Transverse colon (tissue), 4 donors: ENCODE measurements at regions of chr5 and their contacts with region 1.

Region 1: DNA sequence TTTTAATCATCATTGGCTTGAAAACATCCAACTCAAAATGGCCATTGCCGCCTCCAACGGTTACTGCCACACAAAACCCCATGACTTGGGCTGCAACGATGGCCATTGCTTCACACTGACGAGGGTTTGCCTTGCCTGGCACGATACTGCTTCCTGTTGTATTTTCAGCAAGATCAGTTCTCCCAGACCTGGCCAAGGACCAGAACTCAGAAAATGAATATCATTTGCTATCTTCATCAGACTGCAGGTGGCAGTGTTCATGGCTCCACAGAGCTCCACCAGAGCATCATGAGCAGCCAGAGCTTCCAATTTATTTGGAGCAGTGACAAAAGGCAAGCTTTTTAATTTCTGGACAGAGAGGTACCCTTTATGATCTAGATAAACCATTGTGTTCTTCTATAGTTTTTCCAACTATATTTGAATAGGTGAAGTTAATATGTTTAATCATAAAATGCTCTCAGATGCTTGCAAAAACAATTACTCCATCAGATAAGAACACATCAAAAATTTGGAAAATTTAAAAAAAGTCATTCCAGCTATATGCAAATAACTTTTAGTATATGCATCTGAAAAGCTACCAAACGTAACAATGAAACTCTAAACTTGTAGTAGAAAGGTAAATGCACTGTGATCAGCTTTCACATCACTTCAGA is 10.4 kb downstream of the AMACR start:
- DNase-seq: peak; percentile 49
- H3K4me3 ChIP-seq: no peak overlapping the region
- H3K27ac ChIP-seq: no peak overlapping the region
- H3K4me1 ChIP-seq: peaks cover 0 to 13% (median 1%) of the 10 kb centered on the region in 4 donors
- H3K27me3 ChIP-seq: no peaks in the 10 kb centered on the region
- CTCF ChIP-seq: peak; percentile 57 to 62 (median 58)
- EP300 ChIP-seq: no peak
- POLR2A ChIP-seq: no peak

Region 2: DNA sequence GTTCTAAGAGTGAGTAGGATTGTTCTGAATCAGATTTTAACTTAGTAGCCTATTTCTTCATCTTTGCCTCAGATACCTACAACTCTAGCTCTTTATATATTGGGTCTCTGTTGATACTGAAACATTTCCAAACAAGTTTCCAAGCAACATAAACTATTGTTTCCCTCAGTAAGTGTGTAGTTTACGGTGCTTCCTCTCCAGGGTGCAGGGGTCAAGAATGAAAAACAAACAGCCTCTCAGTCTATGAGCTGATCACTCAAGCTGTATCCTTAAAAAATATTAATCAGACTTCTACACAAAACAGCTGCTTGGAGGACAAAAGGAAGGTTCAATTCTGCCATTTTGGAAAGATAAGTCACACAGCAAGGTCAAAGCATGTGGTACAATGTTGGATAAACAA is 180.7 kb before region 1 on chr5:
- in situ Hi-C with region 1: no loop called
- intact Hi-C with region 1: no loop called
- DNase-seq: no peak
- H3K4me3 ChIP-seq: no peak overlapping the region
- H3K27ac ChIP-seq: no peak overlapping the region
- H3K4me1 ChIP-seq: no peaks in the 10 kb centered on the region
- H3K27me3 ChIP-seq: no peaks in the 10 kb centered on the region
- CTCF ChIP-seq: no peak
- EP300 ChIP-seq: no peak
- POLR2A ChIP-seq: no peak

Region 3: GRCh38 chr5:34452170-34452830 is 454.8 kb after region 1 on chr5:
- in situ Hi-C with region 1: loop called in 3 of 4 experiments (anchors 10 to 25 kb)
- intact Hi-C with region 1: no loop called
- DNase-seq: no peak
- H3K4me3 ChIP-seq: no peak overlapping the region
- H3K27ac ChIP-seq: no peak overlapping the region
- H3K4me1 ChIP-seq: no peaks in the 10 kb centered on the region
- H3K27me3 ChIP-seq: no peaks in the 10 kb centered on the region
- CTCF ChIP-seq: peak in 4 of 5 experiments; percentile 11 to 31 (median 20)
- EP300 ChIP-seq: no peak
- POLR2A ChIP-seq: no peak

Region 4: GRCh38 chr5:34459908-34460307 is 462.5 kb after region 1 on chr5:
- in situ Hi-C with region 1: loop called (anchors 10 to 25 kb)
- intact Hi-C with region 1: no loop called
- DNase-seq: no peak
- H3K4me3 ChIP-seq: no peak overlapping the region
- H3K27ac ChIP-seq: no peak overlapping the region
- H3K4me1 ChIP-seq: no peaks in the 10 kb centered on the region
- H3K27me3 ChIP-seq: no peaks in the 10 kb centered on the region
- CTCF ChIP-seq: no peak
- EP300 ChIP-seq: no peak
- POLR2A ChIP-seq: no peak

Region 5: DNA sequence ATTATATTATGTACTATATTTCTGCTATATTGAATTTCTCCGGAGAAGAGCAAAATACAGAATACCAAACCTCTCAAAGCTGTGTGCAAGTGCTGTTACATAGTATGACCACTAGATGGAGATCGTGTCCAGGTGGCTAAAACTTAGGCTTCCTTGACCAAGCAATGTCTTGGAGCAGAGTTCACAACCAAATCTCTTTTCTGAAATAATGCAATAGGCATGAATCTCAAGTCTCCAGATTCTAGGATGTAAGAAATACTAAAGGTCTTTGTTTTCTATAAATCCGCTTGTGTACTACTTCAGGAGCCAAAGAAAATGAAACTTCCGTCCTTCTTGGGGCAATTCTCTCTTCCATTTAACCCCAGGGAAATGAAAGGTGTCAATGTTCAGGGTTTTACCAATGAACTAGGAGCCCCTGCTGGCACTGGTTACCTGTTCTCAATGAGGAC is 477.1 kb after region 1 on chr5:
- in situ Hi-C with region 1: loop called in 3 of 4 experiments (anchors 10 to 25 kb)
- intact Hi-C with region 1: no loop called
- DNase-seq: no peak
- H3K4me3 ChIP-seq: no peak overlapping the region
- H3K27ac ChIP-seq: no peak overlapping the region
- H3K4me1 ChIP-seq: no peaks in the 10 kb centered on the region
- H3K27me3 ChIP-seq: no peaks in the 10 kb centered on the region
- CTCF ChIP-seq: peak; percentile 86 to 98 (median 95)
- EP300 ChIP-seq: no peak
- POLR2A ChIP-seq: no peak